ENCODE measurements at regions of chr15 and their contacts with region 1.

Region 1: DNA sequence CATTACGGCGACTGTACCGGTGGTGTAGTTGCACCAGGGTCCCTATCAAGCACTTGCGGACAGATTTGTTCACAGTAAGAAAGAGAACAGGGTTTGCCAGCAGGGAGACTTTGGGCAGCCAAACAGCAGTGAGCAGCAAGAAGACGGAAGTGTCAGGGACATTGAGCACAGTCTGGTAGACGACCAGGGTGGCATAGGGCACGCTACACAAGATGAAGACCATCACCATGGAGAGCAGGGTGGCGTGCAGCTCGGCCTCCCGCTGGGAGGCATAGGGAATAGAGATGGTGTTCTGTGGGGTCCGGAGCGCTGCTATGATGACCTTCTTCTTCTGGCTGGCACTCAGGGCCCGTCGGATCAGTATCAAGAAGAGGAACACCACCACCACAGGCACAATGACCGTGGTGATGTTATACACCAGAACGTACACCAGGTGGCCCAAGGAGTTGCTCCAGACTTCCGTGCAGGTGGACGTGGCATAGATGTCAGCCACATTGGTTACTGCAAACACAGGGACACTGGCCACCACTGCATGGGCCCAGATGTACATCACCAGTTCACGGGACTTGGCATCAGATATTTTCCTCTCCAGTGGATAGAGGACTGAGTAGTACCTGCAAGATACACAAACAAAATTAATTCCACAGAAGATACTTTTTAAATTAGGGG is 19.1 kb upstream of the FSIP1 start:
- DNase-seq: no peak
- ATAC-seq: peak; percentile 96
- H3K4me3 ChIP-seq: no peak overlapping the region
- H3K27ac ChIP-seq: no peak overlapping the region
- H3K4me1 ChIP-seq: peaks cover 5% of the 10 kb centered on the region; the same call in 1 of the 2 replicates
- H3K27me3 ChIP-seq: no peaks in the 10 kb centered on the region; a peak in 1 of 4 replicates
- CTCF ChIP-seq: peak; percentile 63 to 67 (median 65); a peak in 5 of 6 replicates
- EP300 ChIP-seq: no peak
- POLR2A ChIP-seq: no peak
- RAD21 ChIP-seq: peak; percentile 67

Region 2: DNA sequence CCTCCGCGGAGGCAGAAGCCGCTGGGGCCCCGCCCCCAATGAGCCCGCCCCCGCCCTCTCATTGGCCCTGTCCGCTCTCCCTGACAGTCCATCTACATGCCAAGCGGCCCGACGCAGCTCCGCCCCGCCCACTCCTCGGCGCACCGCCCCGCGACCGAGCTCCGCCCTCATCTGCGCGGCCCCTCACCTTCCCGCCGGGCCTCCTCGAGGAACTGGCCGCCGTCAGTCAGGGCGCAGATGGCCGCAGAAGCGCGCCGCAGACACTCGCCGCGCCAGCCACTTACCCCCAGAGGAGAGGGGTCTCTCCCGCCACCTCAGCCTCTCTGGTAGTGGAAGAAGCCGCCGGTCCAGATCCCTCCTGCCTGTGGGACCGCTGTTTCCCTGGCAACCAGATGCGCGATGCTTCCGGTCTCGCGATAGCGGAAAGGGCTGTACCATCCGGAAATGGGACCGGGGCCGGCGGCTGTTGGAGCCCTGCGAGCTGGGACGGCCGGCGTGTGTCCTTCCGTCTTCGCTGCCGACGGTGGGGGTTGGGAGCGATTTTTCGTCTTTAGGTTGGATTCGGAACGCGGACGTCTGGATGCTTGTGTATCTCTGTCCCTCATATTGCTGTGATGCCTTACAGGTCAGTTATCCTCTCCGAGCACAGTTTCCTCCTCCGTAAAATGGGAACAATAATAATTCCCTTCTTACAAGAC is 19.2 kb before region 1 on chr15 and contains the start of gene FSIP1:
- CTCF ChIA-PET with region 1: interaction called, 30 read pairs
- POLR2A ChIA-PET with region 1: interaction called, 5 read pairs
- RAD21 ChIA-PET with region 1: interaction called, 12 read pairs
- SMC1A ChIA-PET with region 1: interaction called, 37 read pairs
- in situ Hi-C with region 1: no loop called
- intact Hi-C with region 1: no loop called
- DNase-seq: peak; percentile 86
- ATAC-seq: peak; percentile 98
- H3K4me3 ChIP-seq: peak within 1 kb of the TSS; percentile 97
- H3K27ac ChIP-seq: peak within 1 kb of the TSS; percentile 93
- H3K4me1 ChIP-seq: peaks cover 7% of the 10 kb centered on the region
- H3K27me3 ChIP-seq: no peaks in the 10 kb centered on the region
- CTCF ChIP-seq: no peak
- EP300 ChIP-seq: peak in 1 of 2 experiments; percentile 27; a peak in 1 of 4 replicates
- POLR2A ChIP-seq: peak; percentile 93
- RAD21 ChIP-seq: no peak
- polyA plus RNA-seq, gene FSIP1: 0.15 to 0.27 TPM

Measured in GM12878 (cell line).